Posterior cingulate gyrus (tissue), 11 donors: ENCODE measurements at regions of chr20 and their contacts with region 1.

Region 1: DNA sequence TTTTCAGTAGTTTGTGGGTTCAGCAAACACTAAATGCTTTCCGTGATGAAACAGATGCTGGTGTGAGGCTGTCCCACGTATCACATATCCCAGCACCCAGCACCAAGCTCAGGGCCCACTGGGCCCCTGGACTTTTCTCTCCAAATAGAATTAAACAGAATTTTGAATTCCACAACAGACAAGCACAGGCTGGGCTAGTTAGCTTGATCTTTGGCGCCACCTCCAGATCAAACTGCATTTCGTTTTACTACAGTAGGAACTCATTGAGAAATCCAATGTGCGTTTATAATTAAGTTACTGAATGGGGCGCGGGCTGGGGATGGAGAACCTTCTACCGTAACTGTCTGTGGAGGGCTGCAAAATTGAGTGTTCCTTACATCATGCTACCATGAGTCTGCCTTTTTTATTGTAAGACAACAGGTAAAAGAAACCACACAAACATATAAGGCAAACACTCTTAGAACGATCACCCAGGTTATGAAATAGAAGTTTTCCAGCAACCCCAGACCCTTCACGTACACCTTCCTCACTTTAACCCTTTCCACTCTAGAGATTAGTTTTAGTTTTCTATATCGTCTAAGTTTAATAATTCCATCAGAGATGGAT is 107.8 kb downstream of the ZFP64 start:
- DNase-seq: peak in 6 of 10 donors; percentile 58 to 91 (median 63)

Region 2: GRCh38 chr20:50987592-50988210 is 1096.0 kb before region 1 on chr20:
- intact Hi-C with region 1: loop called (anchors 10 kb)
- DNase-seq: peak in 7 of 10 donors; percentile 28 to 90 (median 57)

Region 3: GRCh38 chr20:51639206-51639832 is 444.4 kb before region 1 on chr20:
- intact Hi-C with region 1: loop called (anchors 1 kb)
- DNase-seq: peak in 9 of 10 donors; percentile 31 to 92 (median 69)

Region 4: GRCh38 chr20:51703400-51704287 is 380.1 kb before region 1 on chr20:
- intact Hi-C with region 1: loop called (anchors 10 kb)
- DNase-seq: no peak

Region 5: GRCh38 chr20:51800060-51800794 is 283.5 kb before region 1 on chr20:
- intact Hi-C with region 1: loop called (anchors 10 kb)
- DNase-seq: peak in 8 of 10 donors; percentile 40 to 90 (median 66)

Region 6: GRCh38 chr20:52025938-52026337 is 57.8 kb before region 1 on chr20:
- intact Hi-C with region 1: no loop called
- DNase-seq: no peak